ENCODE measurements at regions of chr7 and their contacts with region 1.

Region 1: GRCh38 chr7:141654551-141654950 is 47.4 kb downstream of the DENND11 start:
- DNase-seq: peak; percentile 16
- H3K4me3 ChIP-seq: no peak overlapping the region
- CTCF ChIP-seq: peak; percentile 78

Region 2: GRCh38 chr7:141014524-141015395 is 639.8 kb before region 1 on chr7 and contains the start of gene MRPS33:
- CTCF ChIA-PET with region 1: interaction called, 17 read pairs
- POLR2A ChIA-PET with region 1: no interaction called
- DNase-seq: peak; percentile 79
- H3K4me3 ChIP-seq: peak within 1 kb of the TSS; percentile 85
- CTCF ChIP-seq: peak; percentile 87

Region 3: GRCh38 chr7:141533149-141533949 is 121.2 kb before region 1 on chr7:
- CTCF ChIA-PET with region 1: interaction called, 29 read pairs
- POLR2A ChIA-PET with region 1: no interaction called
- DNase-seq: peak; percentile 24
- H3K4me3 ChIP-seq: no peak overlapping the region
- CTCF ChIP-seq: peak; percentile 87

Region 4: GRCh38 chr7:141641876-141642275 is 12.7 kb before region 1 on chr7:
- CTCF ChIA-PET with region 1: interaction called, 12 read pairs
- POLR2A ChIA-PET with region 1: no interaction called
- DNase-seq: no peak
- H3K4me3 ChIP-seq: no peak overlapping the region
- CTCF ChIP-seq: no peak

Region 5: DNA sequence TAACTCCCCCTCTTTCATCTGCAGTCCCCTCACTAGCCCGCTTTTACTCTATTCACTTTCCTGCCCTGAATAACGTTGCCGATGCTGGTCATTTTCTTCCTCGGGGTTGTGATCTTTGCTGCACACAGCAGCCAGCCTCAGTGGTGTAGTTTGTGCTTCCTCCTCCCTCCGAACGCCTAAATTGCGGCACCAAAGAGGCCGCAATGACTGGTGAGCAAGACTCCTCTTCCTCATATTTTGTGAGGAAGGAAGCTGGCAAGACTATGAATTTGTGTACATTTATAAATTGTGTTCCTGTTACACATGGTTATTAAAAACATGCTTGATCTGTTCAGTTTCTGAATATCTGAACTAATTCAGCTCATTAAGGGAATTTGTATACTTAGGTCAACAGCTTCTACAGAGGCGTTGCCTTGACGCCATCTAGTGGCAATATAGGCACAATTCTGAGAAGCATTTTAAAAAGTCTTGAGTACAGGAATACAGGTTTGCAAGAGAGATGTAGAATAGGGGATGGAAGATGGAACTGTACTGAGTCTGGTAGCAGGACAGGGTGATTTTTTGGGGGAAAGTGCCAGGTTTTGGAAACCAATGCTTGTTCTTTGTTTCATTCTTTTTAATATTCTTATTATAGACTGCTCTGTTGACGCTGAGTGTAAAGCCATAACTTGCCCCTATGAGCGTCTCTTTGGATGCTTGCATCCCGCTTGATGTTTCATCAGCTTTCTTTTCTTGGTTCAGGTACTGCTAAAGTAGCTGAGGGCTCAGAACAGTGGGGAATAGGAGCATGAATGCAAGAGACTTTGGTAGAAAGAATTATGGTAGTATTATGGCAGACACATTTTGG is 131.4 kb after region 1 on chr7:
- CTCF ChIA-PET with region 1: interaction called, 27 read pairs
- POLR2A ChIA-PET with region 1: no interaction called
- DNase-seq: peak; percentile 5
- H3K4me3 ChIP-seq: no peak overlapping the region
- CTCF ChIP-seq: peak; percentile 64

Measured in AG04449 (cell line).